A549 (cell line): ENCODE measurements at regions of chr7 and their contacts with region 1.

Region 1: DNA sequence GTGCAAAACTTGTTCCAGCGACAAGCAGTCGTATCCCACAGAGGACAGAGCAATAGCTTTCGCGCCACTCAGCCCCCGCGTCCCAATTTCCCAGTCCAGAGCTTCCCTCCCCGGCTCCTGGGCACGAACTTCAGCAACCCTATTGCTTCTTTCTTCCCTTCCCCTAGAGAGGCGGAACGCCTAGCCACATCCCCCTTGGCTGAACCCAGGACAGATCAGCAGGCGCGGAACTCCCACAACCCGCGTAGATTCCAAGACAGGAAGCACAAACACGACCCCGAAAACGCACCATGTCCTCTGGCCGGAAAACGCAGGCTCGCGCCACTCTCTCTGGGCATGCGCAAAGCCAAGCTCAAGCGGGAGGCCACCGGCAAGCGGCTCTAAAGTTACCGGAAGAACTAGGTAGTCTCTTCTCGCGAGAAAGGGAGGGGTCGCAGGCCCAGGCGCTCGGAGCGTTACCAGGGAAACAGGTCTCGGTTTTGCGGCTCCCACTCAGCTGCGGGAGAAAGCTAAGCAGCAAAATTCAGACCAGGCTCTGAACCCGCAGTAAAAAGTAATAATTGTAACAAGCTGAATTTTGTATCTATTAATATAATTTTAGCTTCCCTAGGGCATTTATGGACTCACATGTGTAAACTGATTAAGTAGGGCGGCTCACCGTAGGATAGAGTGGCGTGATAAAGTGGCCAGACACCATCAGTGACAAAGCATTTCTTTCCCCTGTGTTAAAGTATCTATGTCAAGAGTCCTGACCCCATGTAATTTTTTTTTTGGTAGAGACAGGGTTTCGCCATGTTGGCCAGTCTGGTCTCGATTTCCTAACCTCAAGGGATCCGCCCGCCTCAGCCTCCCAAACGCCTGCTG is at the start of gene TMEM209:
- DNase-seq: peak; percentile 86 to 97
- ATAC-seq: peak; percentile 96
- H3K4me3 ChIP-seq: peak within 1 kb of the TSS; percentile 88
- H3K27ac ChIP-seq: peak within 1 kb of the TSS; percentile 94 to 96
- H3K4me1 ChIP-seq: peaks cover 9% of the 10 kb centered on the region; the same call in 2 of the 3 replicates
- CTCF ChIP-seq: no peak
- EP300 ChIP-seq: no peak
- POLR2A ChIP-seq: peak; percentile 93
- RAD21 ChIP-seq: peak in 1 of 2 experiments; percentile 27; a peak in 1 of 5 replicates
- polyA plus RNA-seq, gene TMEM209: 33.9 and 36.6 TPM in 2 replicates

Region 2: GRCh38 chr7:130440527-130441365 is 235.4 kb after region 1 on chr7 and contains the start of gene CEP41:
- CTCF ChIA-PET with region 1: no interaction called
- POLR2A ChIA-PET with region 1: interaction called, 11 read pairs
- DNase-seq: peak; percentile 98
- ATAC-seq: peak; percentile 99
- H3K4me3 ChIP-seq: peak within 1 kb of the TSS; percentile 65
- H3K27ac ChIP-seq: peak within 1 kb of the TSS; percentile 98
- H3K4me1 ChIP-seq: peaks cover 6% of the 10 kb centered on the region; the same call in 1 of the 3 replicates
- CTCF ChIP-seq: no peak
- EP300 ChIP-seq: no peak
- POLR2A ChIP-seq: peak; percentile 27
- RAD21 ChIP-seq: 0 out of 5 replicates have a peak, but pooled peaks of 1 of the 2 experiments have one; percentile 28
- polyA plus RNA-seq, gene CEP41: 21.4 and 23.1 TPM in 2 replicates